GM18951 (cell line): ENCODE measurements at regions of chr22 and their contacts with region 1.

Region 1: GRCh38 chr22:35043252-35043931 is 22.6 kb upstream of the ISX start:
- POLR2A ChIP-seq: no peak

Region 2: DNA sequence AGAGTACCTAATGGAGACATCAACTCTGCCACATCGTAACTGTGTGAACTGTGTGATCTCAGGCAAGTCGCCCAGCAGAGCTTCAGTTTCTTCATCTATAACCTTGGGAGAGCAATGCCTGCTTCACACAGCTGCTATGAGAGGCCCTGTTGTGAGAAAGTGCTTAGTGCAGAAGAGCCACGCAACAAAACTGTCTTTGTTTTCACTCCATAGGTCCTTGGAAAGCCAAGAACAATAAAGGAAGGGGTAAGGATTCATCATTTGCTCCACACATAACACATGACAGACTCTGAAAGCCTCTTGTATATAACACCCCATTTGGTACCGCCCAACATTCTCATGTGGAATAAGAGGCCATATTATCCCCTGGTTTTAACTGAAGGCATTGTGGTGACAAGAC is 209.3 kb before region 1 on chr22:
- in situ Hi-C with region 1: no loop called
- POLR2A ChIP-seq: no peak

Region 3: DNA sequence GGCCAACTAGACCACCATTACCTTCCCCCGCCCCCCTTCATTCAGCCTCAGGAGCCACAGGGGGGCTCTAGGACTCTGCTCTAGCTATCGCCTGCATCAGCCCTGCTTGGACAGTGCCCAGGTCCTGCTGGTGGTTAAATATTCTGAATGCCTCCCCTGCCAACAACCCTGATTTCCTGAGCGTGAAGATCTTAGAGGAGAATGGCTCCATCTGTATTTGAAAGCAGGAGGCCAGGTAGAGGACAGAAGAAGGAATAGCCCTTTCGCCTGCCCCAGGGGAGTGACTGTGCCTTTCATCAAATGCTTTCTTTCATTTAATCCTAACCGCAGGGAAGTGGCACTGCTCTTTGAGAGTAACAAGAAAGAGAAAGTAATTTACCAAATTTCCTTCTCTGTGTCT is 91.8 kb after region 1 on chr22:
- in situ Hi-C with region 1: loop called (anchors 10 kb)
- POLR2A ChIP-seq: no peak